ENCODE measurements at regions of chr7 and their contacts with region 1.

Region 1: GRCh38 chr7:25093268-25093826 is 31.7 kb downstream of the CYCS start:
- DNase-seq: peak; percentile 70
- ATAC-seq: peak; percentile 93
- H3K4me3 ChIP-seq: no peak overlapping the region
- H3K27ac ChIP-seq: no peak overlapping the region
- H3K4me1 ChIP-seq: no peaks in the 10 kb centered on the region
- H3K27me3 ChIP-seq: no peaks in the 10 kb centered on the region
- CTCF ChIP-seq: peak; percentile 88
- POLR2A ChIP-seq: no peak
- RAD21 ChIP-seq: peak; percentile 79

Region 2: GRCh38 chr7:24572997-24573625 is 520.2 kb before region 1 on chr7 and contains the start of gene PALS2:
- CTCF ChIA-PET with region 1: interaction called, 4 read pairs
- POLR2A ChIA-PET with region 1: no interaction called
- dilution Hi-C with region 1: no loop called
- in situ Hi-C with region 1: no loop called
- intact Hi-C with region 1: loop called (anchors 1 kb)
- DNase-seq: peak; percentile 58
- ATAC-seq: peak; percentile 76
- H3K4me3 ChIP-seq: peak within 1 kb of the TSS; percentile 98
- H3K27ac ChIP-seq: peak within 1 kb of the TSS; percentile 65
- H3K4me1 ChIP-seq: 0 out of 2 replicates have a peak, but pooled peaks cover 2% of the 10 kb centered on the region
- H3K27me3 ChIP-seq: peaks cover 26% of the 10 kb centered on the region
- CTCF ChIP-seq: no peak
- POLR2A ChIP-seq: no peak
- RAD21 ChIP-seq: no peak
- total RNA-seq, gene PALS2: 15.4 and 29.7 TPM in 2 replicates

Region 3: DNA sequence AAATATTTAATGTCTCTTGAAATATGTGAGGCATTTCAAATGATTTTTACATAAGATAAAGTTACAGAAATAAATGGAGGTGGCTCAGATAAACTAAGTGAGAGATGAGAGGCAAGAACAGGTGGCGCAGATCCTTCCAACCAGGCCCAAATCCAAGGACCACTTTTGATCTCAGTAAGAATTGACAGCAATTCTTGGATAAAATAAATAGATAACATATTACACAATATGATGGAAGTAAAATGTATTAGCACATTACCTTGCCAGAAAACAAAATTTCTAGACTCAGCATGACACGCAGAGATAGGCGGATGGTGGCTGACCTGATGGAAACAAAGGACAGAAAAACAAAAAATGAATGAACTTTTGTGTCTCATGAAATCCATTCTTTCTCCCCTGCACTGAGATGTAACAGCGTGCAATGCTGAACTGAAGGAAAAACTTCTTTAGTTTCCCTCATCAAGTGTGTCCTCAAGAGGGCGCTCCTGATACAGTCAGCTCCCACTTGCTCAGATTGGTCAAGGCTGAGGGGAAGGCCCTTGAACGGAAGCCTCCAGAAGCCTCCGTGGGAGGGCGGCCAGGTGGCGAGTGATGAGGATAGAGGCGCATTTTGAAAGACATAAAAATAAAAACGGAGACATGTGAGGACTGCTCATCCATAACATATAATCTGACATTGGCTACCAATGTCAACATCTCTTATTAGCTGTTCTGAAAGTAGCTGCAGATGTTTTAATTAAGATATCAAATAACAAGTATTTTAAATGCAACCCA is 273.2 kb before region 1 on chr7:
- CTCF ChIA-PET with region 1: interaction called, 10 read pairs
- POLR2A ChIA-PET with region 1: no interaction called
- dilution Hi-C with region 1: loop called (anchors 25 kb)
- in situ Hi-C with region 1: loop called (anchors 5 kb)
- intact Hi-C with region 1: loop called (anchors 1 kb)
- DNase-seq: peak; percentile 90
- ATAC-seq: peak; percentile 86
- H3K4me3 ChIP-seq: no peak overlapping the region
- H3K27ac ChIP-seq: no peak overlapping the region
- H3K4me1 ChIP-seq: peaks cover 12% of the 10 kb centered on the region
- H3K27me3 ChIP-seq: no peaks in the 10 kb centered on the region
- CTCF ChIP-seq: peak; percentile 89
- POLR2A ChIP-seq: no peak; the same call in 1 of the 2 replicates
- RAD21 ChIP-seq: peak; percentile 90

Region 4: GRCh38 chr7:24979863-24980533 is 113.3 kb before region 1 on chr7 and contains the start of gene OSBPL3:
- CTCF ChIA-PET with region 1: interaction called, 6 read pairs
- POLR2A ChIA-PET with region 1: interaction called, 3 read pairs
- dilution Hi-C with region 1: no loop called
- in situ Hi-C with region 1: no loop called
- intact Hi-C with region 1: loop called (anchors 1 kb)
- DNase-seq: peak; percentile 95
- ATAC-seq: peak; percentile 91
- H3K4me3 ChIP-seq: peak within 1 kb of the TSS; percentile 77
- H3K27ac ChIP-seq: peak within 1 kb of the TSS; percentile 84
- H3K4me1 ChIP-seq: peaks cover 8% of the 10 kb centered on the region
- H3K27me3 ChIP-seq: no peaks in the 10 kb centered on the region
- CTCF ChIP-seq: peak; percentile 33; the same call in 1 of the 2 replicates
- POLR2A ChIP-seq: peak; percentile 79
- RAD21 ChIP-seq: peak; percentile 41
- total RNA-seq, gene OSBPL3: 29.9 and 30.0 TPM in 2 replicates

Region 5: DNA sequence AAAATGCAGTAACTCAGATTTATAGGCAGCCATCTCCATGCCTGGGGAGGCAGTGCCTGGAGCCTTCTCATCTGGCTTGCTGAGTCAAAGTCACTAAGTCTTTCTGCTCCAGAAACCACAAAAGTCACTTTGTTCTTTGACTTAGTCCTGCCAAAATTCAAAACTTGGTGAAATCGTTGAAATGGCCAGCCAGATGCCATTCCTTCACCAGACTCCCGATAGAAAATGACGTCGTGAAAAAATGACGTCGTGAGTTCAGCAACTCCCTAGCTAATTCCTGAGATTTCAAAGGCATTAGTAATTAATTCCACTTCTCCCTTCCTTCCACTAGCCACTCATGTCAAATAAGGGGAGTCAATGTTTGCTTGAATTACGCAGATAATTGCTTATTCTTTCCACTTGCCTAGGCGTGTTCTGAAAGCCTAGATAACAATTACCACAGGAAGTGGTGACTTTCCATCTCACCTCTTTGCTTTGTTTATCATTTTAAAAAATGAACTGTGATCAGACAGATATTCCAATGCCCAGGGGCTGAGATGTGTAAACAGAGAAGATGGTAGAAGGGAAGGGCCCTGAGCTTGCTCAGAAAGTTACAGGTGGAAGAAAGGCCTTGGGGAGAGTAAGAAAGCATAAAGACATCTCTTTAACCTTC is 64.9 kb before region 1 on chr7:
- CTCF ChIA-PET with region 1: no interaction called
- POLR2A ChIA-PET with region 1: no interaction called
- dilution Hi-C with region 1: no loop called
- in situ Hi-C with region 1: no loop called
- intact Hi-C with region 1: no loop called
- DNase-seq: peak; percentile 96
- ATAC-seq: peak; percentile 36
- H3K4me3 ChIP-seq: no peak overlapping the region
- H3K27ac ChIP-seq: peak overlapping the region; percentile 88
- H3K4me1 ChIP-seq: peaks cover 30% of the 10 kb centered on the region
- H3K27me3 ChIP-seq: no peaks in the 10 kb centered on the region
- CTCF ChIP-seq: no peak
- POLR2A ChIP-seq: no peak
- RAD21 ChIP-seq: no peak

Region 6: DNA sequence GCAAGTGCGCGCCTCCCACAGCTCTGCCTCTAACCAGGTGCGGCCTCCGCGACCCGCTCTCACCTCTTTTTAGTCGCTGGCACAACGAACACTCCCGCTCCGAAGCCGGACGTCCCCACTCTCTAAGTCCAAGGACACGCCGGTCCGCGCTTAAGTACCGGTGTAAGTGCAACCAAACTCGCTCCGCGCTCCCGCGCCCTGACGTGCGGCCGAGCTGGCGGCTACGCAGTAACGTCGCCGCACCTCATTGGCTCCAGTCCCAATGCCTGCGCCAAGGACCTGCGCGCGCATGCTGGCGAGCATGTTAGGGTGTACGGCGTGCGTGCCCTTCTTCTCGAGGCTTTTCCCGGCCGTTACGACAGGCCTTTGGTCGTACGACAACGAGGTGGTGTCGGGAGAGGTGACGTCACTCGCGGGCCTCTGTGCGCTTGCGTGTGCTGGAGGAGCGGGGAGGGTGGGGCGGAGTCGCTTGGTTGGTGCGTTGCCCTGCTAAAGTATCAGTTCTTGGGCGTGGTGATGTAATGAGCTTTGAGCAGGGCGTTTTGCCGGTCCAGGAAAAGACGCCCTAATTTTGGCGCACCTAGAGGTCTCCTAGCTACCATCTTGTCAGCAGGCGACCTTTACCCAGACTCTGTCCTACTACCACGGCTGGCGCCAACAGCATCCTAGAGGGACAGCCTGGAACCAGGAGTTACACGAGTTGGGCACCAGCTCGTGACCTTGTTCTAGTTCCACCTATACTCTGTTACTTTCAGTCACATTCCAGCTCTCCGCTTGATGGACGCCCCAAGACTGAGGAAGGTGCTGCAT is 32.0 kb after region 1 on chr7 and contains the start of gene CYCS:
- CTCF ChIA-PET with region 1: interaction called, 3 read pairs
- POLR2A ChIA-PET with region 1: interaction called, 11 read pairs
- dilution Hi-C with region 1: no loop called
- in situ Hi-C with region 1: no loop called
- intact Hi-C with region 1: no loop called
- DNase-seq: peak; percentile 100
- ATAC-seq: peak; percentile 95
- H3K4me3 ChIP-seq: peak within 1 kb of the TSS; percentile 59
- H3K27ac ChIP-seq: peak within 1 kb of the TSS; percentile 76
- H3K4me1 ChIP-seq: no peaks in the 10 kb centered on the region
- H3K27me3 ChIP-seq: no peaks in the 10 kb centered on the region
- CTCF ChIP-seq: no peak
- POLR2A ChIP-seq: peak; percentile 100
- RAD21 ChIP-seq: no peak
- total RNA-seq, gene CYCS: 22.9 and 65.3 TPM in 2 replicates